ENCODE measurements at regions of chrX and their contacts with region 1.

Region 1: DNA sequence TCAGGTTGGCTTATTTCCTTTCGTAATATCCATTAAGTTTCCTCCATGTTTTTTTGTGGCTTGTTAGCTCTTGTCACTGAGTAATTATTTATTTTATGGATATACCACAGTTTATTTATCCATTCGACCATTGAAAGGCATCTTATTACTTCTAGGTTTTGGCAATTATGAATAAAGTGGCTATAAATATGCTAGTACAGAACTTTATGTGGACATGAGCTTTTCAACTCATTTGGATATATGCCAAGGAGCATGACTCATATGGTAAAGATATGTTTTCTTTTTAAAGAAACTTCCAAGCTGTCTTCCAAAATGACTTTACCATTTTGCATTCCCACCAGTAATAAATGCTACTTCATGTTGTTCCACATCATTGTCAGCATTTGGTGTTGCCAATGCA is 803.6 kb downstream of the GLUD2 start:
- DNase-seq: no peak
- ATAC-seq: no peak
- H3K4me3 ChIP-seq: no peak overlapping the region
- H3K4me3 Mint-ChIP-seq: no peak overlapping the region
- H3K27ac ChIP-seq: no peak overlapping the region
- H3K27ac Mint-ChIP-seq: no peak overlapping the region
- H3K4me1 ChIP-seq: no peaks in the 10 kb centered on the region
- H3K4me1 Mint-ChIP-seq: no peaks in the 10 kb centered on the region
- H3K27me3 ChIP-seq: no peaks in the 10 kb centered on the region
- H3K27me3 Mint-ChIP-seq: no peaks in the 10 kb centered on the region
- CTCF ChIP-seq: no peak

Region 2: DNA sequence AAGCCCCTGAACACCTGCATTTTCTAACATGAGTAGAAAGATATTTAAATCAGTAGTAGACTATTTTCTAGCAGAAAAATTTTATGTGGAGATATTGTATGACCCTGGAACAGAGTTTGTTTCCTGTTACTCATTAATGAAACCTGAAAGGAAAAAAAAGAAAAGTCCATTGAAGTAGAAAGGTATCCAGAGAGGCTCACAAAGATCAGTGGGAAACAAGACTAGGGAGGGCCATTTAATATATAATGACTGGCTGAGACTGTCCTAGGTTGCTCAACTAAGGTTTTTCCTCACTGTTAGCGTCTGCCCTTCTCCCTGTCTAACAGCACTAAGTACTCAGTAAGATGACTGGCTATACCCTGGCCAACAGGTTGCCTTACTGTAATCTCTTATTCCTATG is 15.0 kb before region 1 on chrX:
- CTCF ChIA-PET with region 1: no interaction called
- POLR2A ChIA-PET with region 1: interaction called, 11 read pairs
- intact Hi-C with region 1: no loop called
- DNase-seq: no peak
- ATAC-seq: no peak
- H3K4me3 ChIP-seq: no peak overlapping the region
- H3K4me3 Mint-ChIP-seq: no peak overlapping the region
- H3K27ac ChIP-seq: no peak overlapping the region
- H3K27ac Mint-ChIP-seq: no peak overlapping the region
- H3K4me1 ChIP-seq: no peaks in the 10 kb centered on the region
- H3K4me1 Mint-ChIP-seq: no peaks in the 10 kb centered on the region
- H3K27me3 ChIP-seq: no peaks in the 10 kb centered on the region
- H3K27me3 Mint-ChIP-seq: no peaks in the 10 kb centered on the region
- CTCF ChIP-seq: no peak

Region 3: DNA sequence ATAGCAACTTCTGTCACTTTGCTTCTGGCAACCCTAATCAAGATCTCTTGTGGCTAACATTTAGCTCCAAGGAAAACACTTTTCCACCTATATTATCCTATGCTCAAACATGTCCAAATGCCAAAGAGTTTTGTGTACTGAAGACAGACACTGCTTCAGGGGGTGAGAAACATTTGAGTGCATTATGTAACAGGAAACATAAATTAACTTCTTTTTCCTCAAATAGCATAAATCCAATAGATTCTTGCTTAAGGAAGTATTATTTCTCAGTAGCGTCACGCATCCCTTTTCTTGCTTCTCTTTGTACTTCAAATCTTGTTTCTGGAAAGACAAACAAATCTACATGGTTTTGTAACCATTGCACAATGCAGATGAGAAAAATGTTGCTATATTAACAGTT is 35.5 kb after region 1 on chrX:
- CTCF ChIA-PET with region 1: no interaction called
- POLR2A ChIA-PET with region 1: no interaction called
- intact Hi-C with region 1: no loop called
- DNase-seq: no peak
- ATAC-seq: no peak
- H3K4me3 ChIP-seq: no peak overlapping the region
- H3K4me3 Mint-ChIP-seq: no peak overlapping the region
- H3K27ac ChIP-seq: no peak overlapping the region
- H3K27ac Mint-ChIP-seq: no peak overlapping the region
- H3K4me1 ChIP-seq: no peaks in the 10 kb centered on the region
- H3K4me1 Mint-ChIP-seq: no peaks in the 10 kb centered on the region
- H3K27me3 ChIP-seq: no peaks in the 10 kb centered on the region
- H3K27me3 Mint-ChIP-seq: no peaks in the 10 kb centered on the region
- CTCF ChIP-seq: no peak